Right ventricle myocardium inferior (tissue), 1 donor: ENCODE measurements at regions of chr3 and their contacts with region 1.

Region 1: DNA sequence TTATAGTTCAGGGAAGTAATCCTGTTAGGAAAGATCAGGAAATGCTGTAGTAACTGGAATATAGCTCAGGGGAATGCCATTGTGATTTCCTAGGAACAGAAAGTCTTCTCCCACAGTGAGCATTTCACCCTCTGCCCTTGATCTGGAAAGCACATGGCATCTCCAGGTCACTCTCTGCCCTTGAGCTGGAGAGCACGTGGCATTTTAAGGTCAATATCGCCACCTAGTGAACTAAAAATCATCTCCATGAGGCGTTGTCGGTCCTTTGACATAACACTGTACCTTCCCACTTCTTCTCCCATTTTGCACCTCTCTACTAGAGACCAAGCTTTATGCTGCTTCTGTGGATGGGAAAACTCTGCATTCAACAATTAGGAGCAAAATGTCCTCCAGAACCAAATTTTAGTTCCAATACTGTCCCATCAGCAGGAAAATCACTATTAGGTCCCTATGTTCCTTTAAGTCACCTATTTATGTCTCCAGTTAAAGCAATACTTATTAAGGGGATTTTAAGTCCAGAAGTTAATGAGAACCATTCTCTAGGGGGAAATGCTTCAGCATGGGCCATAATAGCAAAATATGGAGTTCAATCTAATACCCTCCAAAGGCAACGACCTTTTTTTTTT is 54.7 kb upstream of the GK5 start:
- DNase-seq: no peak
- ATAC-seq: peak; percentile 85

Region 2: DNA sequence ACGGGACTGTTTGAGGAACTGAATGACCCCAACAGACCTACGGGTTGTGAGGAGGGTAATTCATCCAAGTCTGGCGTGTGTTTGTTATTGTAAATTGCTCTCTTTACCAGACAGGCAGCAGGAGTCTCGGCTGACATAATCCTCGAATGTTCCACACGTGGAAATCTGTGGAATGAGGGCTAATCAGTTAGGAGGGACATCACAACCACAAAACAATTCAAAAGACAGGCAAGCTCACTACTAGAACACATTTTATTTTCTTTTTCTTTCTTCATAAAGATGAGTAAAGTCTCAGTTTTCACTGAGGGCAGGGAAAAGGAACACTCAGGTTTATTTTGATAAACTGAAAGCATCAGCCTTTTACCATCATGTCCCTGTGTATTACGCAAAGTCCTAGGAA is 463.1 kb before region 1 on chr3:
- intact Hi-C with region 1: no loop called
- DNase-seq: no peak
- ATAC-seq: no peak

Region 3: GRCh38 chr3:141959921-141960554 is 320.0 kb before region 1 on chr3:
- intact Hi-C with region 1: loop called (anchors 1 kb)
- DNase-seq: no peak
- ATAC-seq: peak; percentile 73

Region 4: DNA sequence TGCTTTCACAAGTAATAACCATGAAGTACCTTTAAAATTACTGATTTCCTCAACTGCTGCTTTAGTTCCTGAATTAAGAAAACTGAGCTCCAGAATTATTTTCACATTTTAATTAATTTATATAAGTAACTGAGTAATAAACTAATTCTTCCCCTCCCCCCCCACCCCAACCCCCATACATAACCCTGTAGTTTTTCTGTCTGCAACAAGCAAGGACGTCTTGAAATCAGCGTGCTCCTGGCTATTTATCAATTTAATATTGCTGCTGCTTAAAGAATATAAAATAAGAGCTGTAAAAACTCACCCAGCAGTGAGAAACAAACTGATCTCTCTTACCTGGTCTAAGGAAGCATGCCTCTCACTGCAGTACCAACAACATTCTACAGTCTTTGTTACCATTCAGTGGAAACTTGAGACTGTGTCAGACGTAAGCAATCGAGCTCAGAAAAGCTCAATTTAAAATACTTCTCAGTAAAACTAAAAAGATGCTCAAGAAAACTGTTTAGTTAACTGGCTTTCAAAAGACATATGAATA is 251.8 kb before region 1 on chr3:
- intact Hi-C with region 1: loop called (anchors 10 kb)
- DNase-seq: no peak
- ATAC-seq: peak; percentile 85

Region 5: GRCh38 chr3:142124243-142124642 is 155.8 kb before region 1 on chr3:
- intact Hi-C with region 1: loop called (anchors 2 kb)
- DNase-seq: no peak
- ATAC-seq: no peak

Region 6: GRCh38 chr3:142180761-142181362 is 99.2 kb before region 1 on chr3:
- intact Hi-C with region 1: loop called (anchors 2 kb)
- DNase-seq: no peak
- ATAC-seq: no peak

Region 7: GRCh38 chr3:142243134-142243533 is 36.9 kb before region 1 on chr3:
- intact Hi-C with region 1: no loop called
- DNase-seq: no peak
- ATAC-seq: no peak